ENCODE measurements at regions of chr13 and their contacts with region 1.

Region 1: GRCh38 chr13:95834134-95834765 is 157.3 kb downstream of the DNAJC3 start:
- DNase-seq: peak; percentile 81
- H3K4me3 ChIP-seq: peak overlapping the region in 1 of 3 experiments; percentile 23
- H3K27ac ChIP-seq: peak overlapping the region; percentile 30
- H3K4me1 ChIP-seq: peaks cover 13% of the 10 kb centered on the region
- H3K27me3 ChIP-seq: no peaks in the 10 kb centered on the region
- CTCF ChIP-seq: peak; percentile 85 to 87
- POLR2A ChIP-seq: no peak

Region 2: DNA sequence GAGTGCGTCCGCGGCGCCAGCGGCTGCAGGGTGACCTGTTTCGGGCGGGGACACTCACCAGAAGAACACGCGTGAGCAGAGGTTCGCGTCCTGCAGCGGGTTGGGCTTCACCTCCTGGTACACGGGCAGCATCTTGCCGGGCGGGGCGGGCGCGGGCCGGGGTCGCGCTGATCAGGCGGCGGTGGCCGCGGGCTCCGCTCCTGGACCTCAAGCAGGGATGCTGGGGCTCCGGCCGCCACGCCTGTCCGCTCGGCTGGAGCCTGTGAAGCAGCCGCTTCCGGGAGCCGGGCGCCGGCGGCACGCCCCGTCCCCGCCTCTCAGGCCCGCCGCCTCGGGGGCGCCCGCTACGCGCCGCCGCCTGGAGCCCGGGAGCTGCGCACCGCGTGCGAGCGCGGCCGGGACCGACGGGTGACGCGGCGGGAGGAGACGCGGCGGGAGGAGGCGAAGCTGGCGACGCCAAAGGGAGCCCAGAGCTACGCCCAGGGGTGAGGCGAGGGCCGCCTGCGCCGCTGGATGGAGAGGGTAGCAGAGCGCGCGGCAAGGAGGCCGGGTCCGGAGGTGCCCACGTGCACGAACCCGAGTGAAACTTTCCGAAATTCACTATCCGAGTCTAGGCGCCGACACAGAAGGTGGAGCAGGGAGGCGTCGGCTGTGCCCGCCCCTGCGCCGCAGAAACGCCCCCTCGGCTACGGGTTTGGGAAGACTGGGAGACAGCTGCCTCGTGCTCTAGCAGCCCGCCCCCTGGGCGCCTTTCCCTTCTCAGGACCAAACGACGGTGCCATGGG is 532.9 kb before region 1 on chr13 and contains the start of gene ABCC4:
- CTCF ChIA-PET with region 1: interaction called, 19 read pairs
- POLR2A ChIA-PET with region 1: no interaction called
- dilution Hi-C with region 1: no loop called
- intact Hi-C with region 1: loop called (anchors 2 kb)
- DNase-seq: peak; percentile 72
- H3K4me3 ChIP-seq: peak within 1 kb of the TSS; percentile 73 to 91 (median 83)
- H3K27ac ChIP-seq: peak within 1 kb of the TSS; percentile 84
- H3K4me1 ChIP-seq: peaks cover 18% of the 10 kb centered on the region
- H3K27me3 ChIP-seq: no peaks in the 10 kb centered on the region
- CTCF ChIP-seq: peak in 1 of 2 donors; percentile 8
- POLR2A ChIP-seq: peak; percentile 21
- total RNA-seq, gene ABCC4: 14.7 and 15.9 TPM in 2 replicates

Region 3: GRCh38 chr13:95480131-95480545 is 354.1 kb before region 1 on chr13:
- CTCF ChIA-PET with region 1: interaction called, 10 read pairs
- POLR2A ChIA-PET with region 1: no interaction called
- dilution Hi-C with region 1: no loop called
- intact Hi-C with region 1: no loop called
- DNase-seq: peak; percentile 65
- H3K4me3 ChIP-seq: no peak overlapping the region
- H3K27ac ChIP-seq: no peak overlapping the region
- H3K4me1 ChIP-seq: peaks cover 22% of the 10 kb centered on the region
- H3K27me3 ChIP-seq: no peaks in the 10 kb centered on the region
- CTCF ChIP-seq: no peak
- POLR2A ChIP-seq: no peak

Region 4: GRCh38 chr13:95564733-95565291 is 269.4 kb before region 1 on chr13:
- CTCF ChIA-PET with region 1: interaction called, 11 read pairs
- POLR2A ChIA-PET with region 1: no interaction called
- dilution Hi-C with region 1: no loop called
- intact Hi-C with region 1: no loop called
- DNase-seq: peak; percentile 91
- H3K4me3 ChIP-seq: no peak overlapping the region
- H3K27ac ChIP-seq: peak overlapping the region; percentile 44
- H3K4me1 ChIP-seq: peaks cover 11% of the 10 kb centered on the region
- H3K27me3 ChIP-seq: no peaks in the 10 kb centered on the region
- CTCF ChIP-seq: no peak
- POLR2A ChIP-seq: no peak

Region 5: DNA sequence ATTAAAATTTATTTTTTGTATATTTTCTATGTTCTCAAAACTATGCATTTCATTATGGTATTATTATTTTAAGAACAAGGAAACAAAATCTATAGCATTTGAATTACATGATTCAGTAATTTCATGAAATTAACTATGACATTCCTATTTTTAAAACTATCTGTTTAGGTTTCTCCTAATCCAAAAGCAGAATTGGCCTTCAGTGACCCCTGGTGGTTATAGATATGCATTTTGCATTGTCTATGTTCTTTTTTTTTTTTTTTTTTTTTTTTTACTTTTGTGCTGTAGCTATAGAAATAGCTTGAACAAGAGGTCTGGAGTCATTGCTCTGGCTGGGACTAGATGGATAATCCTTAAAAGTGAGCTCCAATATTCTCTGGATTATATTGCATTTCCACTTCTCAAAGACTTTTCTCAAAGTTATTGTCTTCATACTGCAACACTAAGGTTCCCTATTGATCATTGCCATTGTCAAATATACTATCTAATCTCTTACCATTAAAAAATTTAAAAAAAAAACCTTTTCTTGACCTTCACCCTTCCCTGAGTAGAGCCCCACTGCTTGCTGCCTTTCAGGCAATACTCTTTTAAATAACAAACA is 173.2 kb before region 1 on chr13:
- CTCF ChIA-PET with region 1: interaction called, 32 read pairs
- POLR2A ChIA-PET with region 1: no interaction called
- dilution Hi-C with region 1: no loop called
- intact Hi-C with region 1: loop called (anchors 1 kb)
- DNase-seq: peak; percentile 61
- H3K4me3 ChIP-seq: no peak overlapping the region
- H3K27ac ChIP-seq: no peak overlapping the region
- H3K4me1 ChIP-seq: no peaks in the 10 kb centered on the region
- H3K27me3 ChIP-seq: peaks cover 8 to 10% of the 10 kb centered on the region in 2 experiments
- CTCF ChIP-seq: peak; percentile 45 to 52
- POLR2A ChIP-seq: no peak

Region 6: GRCh38 chr13:95813139-95813538 is 21.1 kb before region 1 on chr13:
- CTCF ChIA-PET with region 1: interaction called, 44 read pairs
- POLR2A ChIA-PET with region 1: no interaction called
- dilution Hi-C with region 1: no loop called
- intact Hi-C with region 1: no loop called
- DNase-seq: no peak
- H3K4me3 ChIP-seq: no peak overlapping the region
- H3K27ac ChIP-seq: no peak overlapping the region
- H3K4me1 ChIP-seq: no peaks in the 10 kb centered on the region
- H3K27me3 ChIP-seq: no peaks in the 10 kb centered on the region
- CTCF ChIP-seq: no peak
- POLR2A ChIP-seq: no peak

Region 7: GRCh38 chr13:95982144-95982543 is 147.9 kb after region 1 on chr13:
- CTCF ChIA-PET with region 1: interaction called, 16 read pairs
- POLR2A ChIA-PET with region 1: no interaction called
- dilution Hi-C with region 1: no loop called
- intact Hi-C with region 1: loop called (anchors 2 kb)
- DNase-seq: no peak
- H3K4me3 ChIP-seq: no peak overlapping the region
- H3K27ac ChIP-seq: no peak overlapping the region
- H3K4me1 ChIP-seq: no peaks in the 10 kb centered on the region
- H3K27me3 ChIP-seq: no peaks in the 10 kb centered on the region
- CTCF ChIP-seq: no peak
- POLR2A ChIP-seq: no peak

Measured in endothelial cell of umbilical vein (primary cell).